Ovary (tissue), 10 donors: ENCODE measurements at regions of chrX and their contacts with region 1.

Region 1: GRCh38 chrX:2665387-2666304 is 25.4 kb upstream of the CD99 start:
- DNase-seq: no peak
- H3K4me3 ChIP-seq: no peak overlapping the region
- H3K27ac ChIP-seq: peak overlapping the region in 1 of 2 donors; percentile 49
- H3K4me1 ChIP-seq: peaks cover 5% of the 10 kb centered on the region
- H3K27me3 ChIP-seq: no peaks in the 10 kb centered on the region
- CTCF ChIP-seq: no peak
- EP300 ChIP-seq: no peak
- POLR2A ChIP-seq: no peak

Region 2: DNA sequence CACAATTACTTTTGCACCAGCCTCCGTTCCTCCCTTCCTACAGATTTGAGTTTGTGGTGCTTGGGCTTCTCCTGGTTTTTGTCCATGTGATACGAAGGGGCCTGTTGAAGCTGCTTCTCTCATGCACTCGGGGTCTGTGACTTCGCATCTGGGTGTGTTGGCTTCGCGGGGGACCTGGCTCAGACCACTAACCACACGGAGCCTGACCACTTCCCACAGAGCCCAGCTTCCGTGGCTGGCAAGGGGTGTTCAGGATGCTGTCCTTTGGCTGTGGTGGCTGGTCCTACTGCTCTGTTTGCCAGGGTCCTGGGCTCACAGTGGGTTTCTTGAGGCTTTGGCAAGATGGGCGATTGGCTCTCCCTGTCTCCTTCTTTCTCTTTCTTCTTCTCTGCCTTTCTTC is 66.4 kb after region 1 on chrX:
- intact Hi-C with region 1: loop called in 1 of 4 experiments (anchors 5 kb)
- DNase-seq: no peak
- H3K4me3 ChIP-seq: no peak overlapping the region
- H3K27ac ChIP-seq: no peak overlapping the region
- H3K4me1 ChIP-seq: no peaks in the 10 kb centered on the region
- H3K27me3 ChIP-seq: no peaks in the 10 kb centered on the region
- CTCF ChIP-seq: no peak
- EP300 ChIP-seq: no peak
- POLR2A ChIP-seq: no peak